CD14-positive monocyte (primary cell): ENCODE measurements at regions of chr12 and their contacts with region 1.

Region 1: DNA sequence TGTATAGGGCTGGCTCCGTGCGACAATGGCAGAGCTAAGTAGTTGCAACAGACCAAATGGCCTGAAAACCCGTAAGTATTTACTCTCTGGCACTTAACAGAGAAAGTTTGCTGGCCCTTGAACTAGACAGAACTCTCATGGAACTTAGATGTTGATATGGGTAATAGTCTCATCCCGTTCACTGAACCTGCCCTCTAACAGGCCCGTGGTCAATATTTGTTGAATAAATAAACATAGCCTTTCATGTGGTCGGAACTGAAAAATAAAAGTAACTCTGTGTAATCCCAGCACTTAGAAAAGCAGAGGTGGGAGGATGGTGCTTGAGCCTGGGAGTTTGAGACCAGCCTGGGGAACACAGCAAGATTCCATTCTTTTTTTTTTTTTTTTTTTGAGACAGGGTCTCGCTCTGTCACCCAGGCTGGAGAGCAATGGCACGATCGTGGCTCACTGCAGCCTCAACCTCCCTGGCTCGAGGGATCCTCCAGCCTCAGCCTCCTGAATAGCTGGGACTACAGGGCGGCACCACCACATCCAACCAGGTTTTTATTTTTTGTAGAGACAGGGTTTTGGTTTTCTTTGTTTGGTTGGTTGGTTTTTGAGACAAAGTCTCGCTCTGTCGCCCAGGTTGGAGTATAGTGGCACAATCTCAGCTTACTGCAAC is 29.7 kb downstream of the KDM2B start:
- DNase-seq: no peak
- H3K4me3 ChIP-seq: no peak overlapping the region
- H3K4me3 Mint-ChIP-seq: no peak overlapping the region
- H3K27ac ChIP-seq: no peak overlapping the region
- H3K27ac Mint-ChIP-seq: peak overlapping the region in 1 of 7 donors; percentile 30
- H3K4me1 ChIP-seq: peaks cover 19% of the 10 kb centered on the region in 2 donors
- H3K4me1 Mint-ChIP-seq: peaks cover 18% of the 10 kb centered on the region
- H3K27me3 ChIP-seq: no peaks in the 10 kb centered on the region
- H3K27me3 Mint-ChIP-seq: peaks cover 0 to 2% (median 0%) of the 10 kb centered on the region in 3 donors
- CTCF ChIP-seq: no peak

Region 2: DNA sequence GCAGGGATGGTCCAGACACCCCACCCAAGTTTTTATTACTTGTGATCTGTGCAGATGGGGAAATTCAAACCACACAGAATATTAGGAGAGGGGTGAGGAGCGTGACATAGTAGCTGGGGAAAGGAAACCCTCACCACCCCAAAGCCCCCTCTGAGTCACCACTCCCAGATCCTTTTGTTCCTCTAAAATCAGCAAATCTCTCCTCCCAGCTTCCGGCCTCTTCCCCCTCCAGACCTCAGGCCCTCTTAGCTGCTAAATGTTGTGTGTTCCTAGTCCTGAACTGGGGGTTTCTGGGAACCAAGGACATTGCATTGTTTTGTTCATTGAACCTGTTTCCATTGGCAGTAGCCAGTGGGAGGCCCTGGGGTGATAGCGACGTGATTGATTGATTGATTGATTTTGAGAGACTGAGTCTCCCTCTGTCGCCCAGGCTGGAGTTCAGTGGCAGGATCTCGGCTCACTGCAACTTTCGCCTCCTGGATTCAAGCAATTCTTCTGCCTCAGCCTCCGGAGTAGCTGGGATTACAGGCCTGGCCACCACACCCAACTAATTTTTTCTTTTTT is 69.3 kb after region 1 on chr12:
- intact Hi-C with region 1: loop called (anchors 5 kb)
- DNase-seq: peak in 2 of 3 donors; percentile 66 to 84
- H3K4me3 ChIP-seq: no peak overlapping the region
- H3K4me3 Mint-ChIP-seq: peak overlapping the region in 1 of 2 donors; percentile 64
- H3K27ac ChIP-seq: no peak overlapping the region
- H3K27ac Mint-ChIP-seq: peak overlapping the region in 4 of 7 donors; percentile 32 to 66 (median 54)
- H3K4me1 ChIP-seq: peaks cover 23 to 33% of the 10 kb centered on the region in 2 donors
- H3K4me1 Mint-ChIP-seq: peaks cover 34% of the 10 kb centered on the region
- H3K27me3 ChIP-seq: no peaks in the 10 kb centered on the region
- H3K27me3 Mint-ChIP-seq: peaks cover 0 to 7% (median 3%) of the 10 kb centered on the region in 3 donors
- CTCF ChIP-seq: no peak

Region 3: GRCh38 chr12:121637231-121637914 is 86.3 kb after region 1 on chr12:
- intact Hi-C with region 1: no loop called
- DNase-seq: peak in 2 of 3 donors; percentile 51 to 61
- H3K4me3 ChIP-seq: peak overlapping the region in 1 of 3 experiments; percentile 18
- H3K4me3 Mint-ChIP-seq: peak overlapping the region in 1 of 2 donors; percentile 65
- H3K27ac ChIP-seq: peak overlapping the region; percentile 73 to 87
- H3K27ac Mint-ChIP-seq: peak overlapping the region; percentile 67 to 88 (median 85)
- H3K4me1 ChIP-seq: peaks cover 17 to 25% of the 10 kb centered on the region in 2 donors
- H3K4me1 Mint-ChIP-seq: peaks cover 34% of the 10 kb centered on the region
- H3K27me3 ChIP-seq: no peaks in the 10 kb centered on the region
- H3K27me3 Mint-ChIP-seq: peaks cover 0 to under 1% (median 0%) of the 10 kb centered on the region in 3 donors
- CTCF ChIP-seq: no peak

Region 4: DNA sequence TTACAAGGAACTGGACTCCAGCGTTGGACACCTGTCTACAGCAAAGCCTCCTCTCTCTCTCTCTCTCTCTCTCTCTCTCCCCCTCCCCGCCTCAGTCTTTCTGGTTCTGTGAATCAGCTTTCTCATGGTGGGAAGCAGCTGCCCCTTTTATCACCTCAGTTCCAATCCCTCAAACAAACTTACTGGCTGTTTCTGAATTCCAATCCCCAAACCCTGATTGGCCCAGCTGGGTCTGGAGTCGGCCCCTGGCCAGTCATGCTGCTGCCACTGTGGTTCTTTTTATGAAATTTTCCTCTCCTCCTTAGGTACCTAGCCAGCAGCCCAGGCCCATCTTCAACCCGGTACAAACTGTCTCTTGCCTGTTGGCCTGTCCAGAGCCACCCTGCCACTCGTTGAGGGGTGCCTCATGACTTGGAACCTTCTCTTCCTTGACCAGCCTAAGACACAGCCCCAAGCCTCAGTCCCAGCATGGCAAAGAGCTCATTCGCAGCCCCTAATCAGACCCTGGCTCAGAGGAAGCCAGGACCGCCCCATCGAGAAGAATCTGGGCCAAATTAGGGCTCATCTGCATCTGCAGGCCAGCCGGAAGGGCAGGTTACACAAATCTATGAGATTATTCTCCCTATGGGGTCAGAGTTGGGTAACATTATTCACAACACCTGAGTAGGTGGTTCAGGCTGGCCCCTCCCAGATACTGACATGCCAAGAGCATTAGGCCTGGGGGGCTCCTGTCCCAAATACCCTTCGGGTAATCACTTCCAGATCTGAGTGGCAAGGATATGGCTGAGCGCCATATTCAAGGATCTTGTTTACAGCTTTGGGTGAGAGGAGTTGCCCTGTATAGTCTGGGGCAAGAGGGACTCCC is 127.8 kb after region 1 on chr12:
- intact Hi-C with region 1: loop called (anchors 5 kb)
- DNase-seq: no peak
- H3K4me3 ChIP-seq: no peak overlapping the region
- H3K4me3 Mint-ChIP-seq: no peak overlapping the region
- H3K27ac ChIP-seq: no peak overlapping the region
- H3K27ac Mint-ChIP-seq: no peak overlapping the region
- H3K4me1 ChIP-seq: peaks cover 3% of the 10 kb centered on the region in 2 donors
- H3K4me1 Mint-ChIP-seq: peaks cover 6% of the 10 kb centered on the region
- H3K27me3 ChIP-seq: no peaks in the 10 kb centered on the region
- H3K27me3 Mint-ChIP-seq: peaks cover 0 to 3% (median 0%) of the 10 kb centered on the region in 3 donors
- CTCF ChIP-seq: no peak